ENCODE measurements at regions of chr1 and their contacts with region 1.

Region 1: DNA sequence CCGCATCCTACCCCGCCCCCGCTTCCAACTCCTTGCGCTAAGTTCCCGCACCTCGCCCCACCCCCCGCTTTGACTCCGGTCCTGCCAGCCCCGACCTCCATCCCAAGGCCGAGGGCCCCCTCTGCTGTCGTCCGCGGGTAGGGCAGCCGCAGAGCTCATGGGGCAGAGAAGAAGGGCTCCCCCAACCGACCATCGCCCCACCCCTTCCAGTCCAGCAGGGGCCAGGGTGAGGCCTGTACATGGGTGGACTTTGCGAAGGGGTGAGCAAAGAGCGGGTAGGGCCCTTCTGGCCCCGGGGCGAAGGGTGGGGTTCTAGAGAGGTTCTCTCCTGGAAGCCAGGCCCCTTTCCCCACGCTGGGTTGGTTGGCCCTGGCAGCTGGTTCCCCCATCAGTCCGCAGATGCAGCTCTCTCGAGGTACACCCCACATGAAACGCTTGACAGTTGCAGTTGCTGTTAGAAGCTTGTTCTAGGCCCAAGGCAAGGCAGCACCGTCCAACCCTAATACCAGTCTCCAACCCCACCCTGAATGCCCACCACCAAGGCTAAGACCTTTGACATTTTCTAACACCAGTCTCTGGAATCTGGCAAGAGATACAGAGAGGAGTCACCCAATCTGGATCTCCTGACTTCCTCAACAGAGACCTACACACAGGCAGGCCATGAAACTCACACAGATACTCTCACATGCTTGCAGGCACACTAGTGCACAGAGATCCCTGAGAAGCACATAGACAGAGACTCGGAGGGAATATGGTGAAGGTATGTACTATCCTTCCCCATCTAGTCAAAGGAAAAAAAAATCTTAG is 25.3 kb upstream of the ADGRB2 start:
- DNase-seq: peak; percentile 98
- H3K4me3 Mint-ChIP-seq: peak overlapping the region; percentile 83
- H3K27ac Mint-ChIP-seq: no peak overlapping the region
- H3K4me1 Mint-ChIP-seq: peaks cover 13% of the 10 kb centered on the region
- H3K27me3 Mint-ChIP-seq: peaks cover 49% of the 10 kb centered on the region

Region 2: DNA sequence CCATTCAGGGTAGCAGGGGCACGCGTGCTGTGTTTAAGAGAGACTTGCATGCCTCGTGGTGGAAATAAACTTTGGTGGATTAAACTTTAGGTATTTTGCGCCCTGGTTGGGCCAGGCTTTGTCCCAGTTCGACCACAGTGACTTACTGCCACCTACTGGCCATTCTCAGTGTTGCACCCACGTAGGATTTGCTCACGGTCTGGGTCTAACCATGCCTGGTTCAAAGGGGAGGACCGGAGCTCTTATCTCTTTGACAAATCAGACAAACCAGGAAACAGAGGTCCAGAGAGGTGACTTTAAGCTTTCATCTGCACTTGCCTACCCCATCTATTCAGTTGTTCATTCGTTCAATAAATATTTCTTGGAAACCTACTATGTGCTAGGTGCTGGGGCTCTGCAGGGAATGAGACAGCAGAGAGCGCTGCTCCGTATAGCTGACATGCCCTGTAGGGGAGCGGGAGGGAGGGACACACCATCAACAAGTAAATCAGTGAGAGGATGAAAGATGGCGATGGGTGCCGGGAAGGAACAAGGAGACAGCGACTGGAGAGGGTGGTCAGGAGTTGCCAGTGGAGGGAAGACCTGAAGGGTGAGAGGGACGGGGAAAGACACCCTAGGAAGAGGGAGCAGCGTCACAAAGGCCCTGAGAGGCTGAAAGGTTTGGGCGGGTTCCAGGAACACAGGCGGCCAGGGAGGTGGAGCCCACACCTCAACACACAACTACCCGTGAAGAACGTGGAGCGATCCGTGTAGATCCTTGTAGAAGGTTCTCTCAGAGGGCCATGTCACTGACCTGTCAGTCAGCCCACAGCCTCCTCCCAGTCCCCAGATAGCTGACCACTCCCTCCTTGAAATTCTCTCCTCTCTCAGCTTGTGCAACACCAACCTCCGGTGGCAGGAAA is 240.3 kb before region 1 on chr1:
- CTCF ChIA-PET with region 1: interaction called, 12 read pairs
- DNase-seq: peak; percentile 94
- H3K4me3 Mint-ChIP-seq: peak overlapping the region; percentile 35
- H3K27ac Mint-ChIP-seq: no peak overlapping the region
- H3K4me1 Mint-ChIP-seq: peaks cover 11% of the 10 kb centered on the region
- H3K27me3 Mint-ChIP-seq: peaks cover 17% of the 10 kb centered on the region

Region 3: GRCh38 chr1:31652891-31653499 is 136.5 kb before region 1 on chr1:
- CTCF ChIA-PET with region 1: no interaction called
- DNase-seq: no peak
- H3K4me3 Mint-ChIP-seq: no peak overlapping the region
- H3K27ac Mint-ChIP-seq: no peak overlapping the region
- H3K4me1 Mint-ChIP-seq: peaks cover 3% of the 10 kb centered on the region
- H3K27me3 Mint-ChIP-seq: peaks cover 66% of the 10 kb centered on the region

Region 4: DNA sequence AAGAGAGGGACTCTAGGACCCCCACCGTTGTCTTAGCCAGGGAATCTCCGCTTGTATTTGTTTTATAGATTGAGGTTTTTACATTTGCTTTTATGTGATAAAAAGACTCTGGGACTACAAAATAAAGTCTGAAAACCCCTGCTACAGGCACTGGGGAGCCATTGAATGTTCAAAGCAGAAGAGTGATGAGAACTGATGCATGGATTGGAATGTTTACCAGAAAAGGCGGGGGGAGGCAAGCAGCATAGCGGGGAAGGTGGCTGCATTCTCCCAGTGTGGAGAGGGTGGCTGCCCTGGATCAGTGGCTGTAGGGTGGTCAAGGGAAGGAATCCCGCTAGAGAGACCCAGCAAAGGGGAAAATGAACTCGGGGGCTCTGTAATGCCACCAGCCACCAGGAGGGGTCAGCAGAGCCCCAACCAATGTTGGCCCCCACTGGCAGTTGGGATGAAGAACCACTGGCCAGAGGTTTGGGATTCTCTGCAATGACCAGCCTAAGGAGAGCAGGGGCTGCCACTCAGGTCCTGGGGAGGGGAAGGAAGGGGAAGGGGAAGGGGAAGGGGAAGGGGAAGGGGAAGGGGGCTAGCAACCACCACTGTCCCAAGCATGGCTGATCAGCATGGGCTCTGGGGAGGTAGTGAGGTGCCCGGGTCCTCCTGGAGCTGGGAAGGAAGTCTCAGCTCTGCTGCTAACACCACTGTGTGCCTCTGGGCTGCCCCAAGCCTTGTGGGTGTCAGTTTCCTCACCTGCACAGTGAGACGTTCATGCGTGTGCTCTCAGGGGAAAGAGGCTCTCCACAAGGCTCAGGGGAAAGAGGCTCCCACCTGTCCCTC is 125.6 kb before region 1 on chr1:
- CTCF ChIA-PET with region 1: interaction called, 48 read pairs
- DNase-seq: peak; percentile 61
- H3K4me3 Mint-ChIP-seq: no peak overlapping the region
- H3K27ac Mint-ChIP-seq: no peak overlapping the region
- H3K4me1 Mint-ChIP-seq: no peaks in the 10 kb centered on the region
- H3K27me3 Mint-ChIP-seq: peaks cover 44% of the 10 kb centered on the region

Region 5: DNA sequence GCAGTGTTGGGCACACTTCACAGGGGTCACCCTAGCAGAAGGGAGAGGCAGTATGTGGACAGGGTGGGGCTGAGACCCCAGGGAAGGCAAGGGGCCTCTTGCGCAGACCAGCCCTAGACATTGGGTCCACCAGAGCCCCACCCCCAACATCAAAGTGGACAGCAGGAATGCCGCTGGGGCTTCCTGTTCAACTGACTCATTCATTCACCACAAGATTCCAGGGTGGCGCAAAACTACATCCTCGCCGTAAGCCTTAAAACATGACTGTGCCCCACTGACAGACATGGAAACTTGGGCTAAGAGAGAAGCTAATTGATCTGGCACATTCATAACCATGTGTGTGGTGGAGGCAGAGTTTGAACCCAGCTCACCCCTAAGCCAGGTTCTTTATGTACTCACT is 99.6 kb before region 1 on chr1:
- CTCF ChIA-PET with region 1: no interaction called
- DNase-seq: no peak
- H3K4me3 Mint-ChIP-seq: no peak overlapping the region
- H3K27ac Mint-ChIP-seq: no peak overlapping the region
- H3K4me1 Mint-ChIP-seq: no peaks in the 10 kb centered on the region
- H3K27me3 Mint-ChIP-seq: peaks cover 21% of the 10 kb centered on the region

Region 6: GRCh38 chr1:31745096-31745945 is 44.1 kb before region 1 on chr1:
- CTCF ChIA-PET with region 1: interaction called, 16 read pairs
- DNase-seq: peak; percentile 76
- H3K4me3 Mint-ChIP-seq: no peak overlapping the region
- H3K27ac Mint-ChIP-seq: no peak overlapping the region
- H3K4me1 Mint-ChIP-seq: peaks cover 4% of the 10 kb centered on the region
- H3K27me3 Mint-ChIP-seq: peaks cover 37% of the 10 kb centered on the region

Region 7: GRCh38 chr1:31778763-31779488 is 10.5 kb before region 1 on chr1:
- CTCF ChIA-PET with region 1: interaction called, 14 read pairs
- DNase-seq: no peak
- H3K4me3 Mint-ChIP-seq: no peak overlapping the region
- H3K27ac Mint-ChIP-seq: no peak overlapping the region
- H3K4me1 Mint-ChIP-seq: no peaks in the 10 kb centered on the region
- H3K27me3 Mint-ChIP-seq: peaks cover 73% of the 10 kb centered on the region

Region 8: DNA sequence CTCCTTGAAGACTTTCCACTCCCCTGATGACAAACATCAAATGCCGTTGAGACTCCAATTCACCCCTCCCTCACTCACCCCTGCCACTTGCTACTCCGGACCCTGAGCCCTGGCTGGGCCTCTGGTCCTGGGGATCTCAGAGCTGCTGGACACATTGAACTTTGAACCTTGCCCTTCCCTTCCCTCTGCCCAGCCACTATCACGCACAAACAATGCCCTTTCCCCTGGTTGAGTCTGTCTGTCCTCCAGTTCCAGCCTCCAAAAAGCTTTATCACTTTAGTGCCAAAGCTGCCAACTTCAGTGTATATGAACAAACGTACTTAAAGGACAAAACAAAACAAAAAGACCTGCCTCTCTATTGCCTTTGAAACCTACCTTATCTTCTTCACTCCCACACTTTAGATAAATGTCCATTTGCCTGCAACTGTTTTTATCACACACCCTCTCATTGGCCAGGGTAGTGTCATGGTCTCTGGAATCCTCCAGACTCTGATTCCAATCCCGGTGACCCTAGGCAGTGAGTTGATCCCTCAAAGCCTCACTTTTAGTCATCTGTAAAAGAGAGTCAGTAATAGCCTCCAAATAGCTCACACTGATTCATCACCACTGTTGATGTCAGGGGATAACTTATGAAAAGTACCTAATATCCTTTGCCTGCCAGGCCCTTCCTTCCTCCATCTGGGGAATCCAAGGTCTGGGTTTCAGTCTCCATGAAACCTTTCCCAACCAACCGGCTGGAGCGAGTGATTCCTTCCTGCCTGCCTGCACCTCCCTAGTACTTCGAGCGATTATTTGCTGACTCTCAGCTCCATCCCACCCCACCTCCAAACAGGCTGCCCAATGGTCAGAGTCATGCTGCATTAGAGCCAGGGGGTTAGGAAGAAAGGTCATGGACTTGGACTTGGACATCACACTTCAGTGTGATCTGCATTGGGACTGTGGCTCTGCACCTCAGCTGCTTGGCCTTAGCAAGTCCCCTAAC is 42.2 kb after region 1 on chr1:
- CTCF ChIA-PET with region 1: no interaction called
- DNase-seq: no peak
- H3K4me3 Mint-ChIP-seq: no peak overlapping the region
- H3K27ac Mint-ChIP-seq: no peak overlapping the region
- H3K4me1 Mint-ChIP-seq: peaks cover 46% of the 10 kb centered on the region
- H3K27me3 Mint-ChIP-seq: peaks cover 11% of the 10 kb centered on the region

Region 9: DNA sequence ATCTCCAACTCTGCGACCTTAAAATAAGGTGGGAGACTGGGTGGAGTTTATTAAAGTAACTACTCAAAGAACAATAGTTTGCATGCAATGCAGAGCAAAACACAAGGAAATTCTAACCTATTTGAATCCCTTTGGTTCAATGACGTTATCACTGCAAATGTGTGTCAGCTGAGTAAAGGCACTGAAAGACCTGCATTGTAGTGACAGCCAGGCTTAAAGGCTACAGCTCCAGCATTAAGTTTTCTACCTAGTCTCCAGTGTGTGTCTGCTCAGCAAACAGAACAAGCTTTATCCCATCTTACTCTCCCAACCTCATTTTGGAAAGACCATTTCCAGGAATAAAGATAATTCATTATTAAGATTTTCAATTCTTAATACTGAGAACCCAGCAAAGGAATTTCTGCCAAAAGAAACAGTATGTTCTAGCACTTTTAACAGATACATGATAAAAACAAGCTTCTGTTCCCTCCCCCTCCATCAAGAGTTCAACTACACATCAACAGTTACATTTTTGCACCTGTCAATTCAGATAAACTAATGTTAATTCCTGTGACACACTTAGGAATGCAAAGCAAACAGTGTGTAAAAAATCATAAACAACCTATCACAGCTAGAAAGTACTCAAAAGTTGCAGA is 134.6 kb after region 1 on chr1:
- CTCF ChIA-PET with region 1: no interaction called
- DNase-seq: no peak
- H3K4me3 Mint-ChIP-seq: peak overlapping the region; percentile 24
- H3K27ac Mint-ChIP-seq: peak overlapping the region; percentile 79
- H3K4me1 Mint-ChIP-seq: peaks cover 83% of the 10 kb centered on the region
- H3K27me3 Mint-ChIP-seq: no peaks in the 10 kb centered on the region